ENCODE measurements at regions of chr1 and their contacts with region 1.

Region 1: GRCh38 chr1:26111530-26112406 is at the start of gene PDIK1L:
- DNase-seq: peak; percentile 97
- ATAC-seq: peak; percentile 83
- H3K4me3 ChIP-seq: peak within 1 kb of the TSS; percentile 65 to 95 (median 94)
- H3K4me3 Mint-ChIP-seq: peak within 1 kb of the TSS; percentile 93
- H3K27ac ChIP-seq: peak within 1 kb of the TSS; percentile 60 to 81
- H3K27ac Mint-ChIP-seq: peak within 1 kb of the TSS; percentile 94
- H3K4me1 ChIP-seq: peaks cover 12 to 17% of the 10 kb centered on the region in 2 donors
- H3K4me1 Mint-ChIP-seq: peaks cover 16% of the 10 kb centered on the region
- H3K27me3 ChIP-seq: no peaks in the 10 kb centered on the region
- H3K27me3 Mint-ChIP-seq: no peaks in the 10 kb centered on the region
- CTCF ChIP-seq: no peak
- total RNA-seq, gene PDIK1L: 15.2 and 17.3 TPM in 2 replicates

Region 2: GRCh38 chr1:26035959-26036755 is 75.6 kb before region 1 on chr1:
- CTCF ChIA-PET with region 1: no interaction called
- POLR2A ChIA-PET with region 1: no interaction called
- intact Hi-C with region 1: loop called (anchors 2 kb)
- DNase-seq: peak; percentile 88
- ATAC-seq: peak; percentile 74
- H3K4me3 ChIP-seq: peak overlapping the region; percentile 41 to 96 (median 95)
- H3K4me3 Mint-ChIP-seq: peak overlapping the region; percentile 96
- H3K27ac ChIP-seq: peak overlapping the region in 1 of 2 donors; percentile 67
- H3K27ac Mint-ChIP-seq: peak overlapping the region; percentile 89
- H3K4me1 ChIP-seq: peaks cover 10 to 13% of the 10 kb centered on the region in 2 donors
- H3K4me1 Mint-ChIP-seq: peaks cover 13% of the 10 kb centered on the region
- H3K27me3 ChIP-seq: peaks cover 0 to 22% (median 4%) of the 10 kb centered on the region in 4 experiments
- H3K27me3 Mint-ChIP-seq: peaks cover 6% of the 10 kb centered on the region
- CTCF ChIP-seq: peak; percentile 99

Region 3: DNA sequence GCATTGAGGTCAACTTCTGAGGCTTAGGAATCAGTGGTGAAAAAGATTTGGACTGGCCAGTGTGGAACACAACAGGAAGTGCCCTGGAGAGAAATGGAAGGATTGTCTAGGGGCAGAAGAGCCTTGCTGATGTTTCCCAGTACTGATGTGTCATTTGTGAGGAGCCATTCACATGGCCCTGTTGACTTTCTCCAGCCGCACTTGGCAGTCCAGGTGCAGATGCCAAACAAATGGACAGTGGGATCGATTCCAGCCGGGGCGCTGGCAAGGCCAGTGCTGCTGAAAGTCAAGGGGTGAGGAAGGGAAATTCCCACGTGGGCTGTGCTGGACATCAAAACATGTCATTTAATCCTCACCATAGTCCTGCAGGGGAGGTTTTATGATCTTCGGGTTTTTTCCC is 39.5 kb before region 1 on chr1:
- CTCF ChIA-PET with region 1: no interaction called
- POLR2A ChIA-PET with region 1: no interaction called
- intact Hi-C with region 1: no loop called
- DNase-seq: no peak
- ATAC-seq: no peak
- H3K4me3 ChIP-seq: no peak overlapping the region
- H3K4me3 Mint-ChIP-seq: no peak overlapping the region
- H3K27ac ChIP-seq: no peak overlapping the region
- H3K27ac Mint-ChIP-seq: no peak overlapping the region
- H3K4me1 ChIP-seq: no peaks in the 10 kb centered on the region
- H3K4me1 Mint-ChIP-seq: no peaks in the 10 kb centered on the region
- H3K27me3 ChIP-seq: peaks cover 0 to 7% (median 3%) of the 10 kb centered on the region in 4 experiments
- H3K27me3 Mint-ChIP-seq: peaks cover 39% of the 10 kb centered on the region
- CTCF ChIP-seq: no peak

Region 4: GRCh38 chr1:26169669-26170471 is 58.1 kb after region 1 on chr1 and contains the start of gene ZNF593:
- CTCF ChIA-PET with region 1: interaction called, 10 read pairs
- POLR2A ChIA-PET with region 1: no interaction called
- intact Hi-C with region 1: loop called (anchors 1 kb)
- DNase-seq: peak; percentile 92
- ATAC-seq: peak; percentile 97
- H3K4me3 ChIP-seq: peak within 1 kb of the TSS; percentile 58 to 94 (median 86)
- H3K4me3 Mint-ChIP-seq: peak within 1 kb of the TSS; percentile 93
- H3K27ac ChIP-seq: peak within 1 kb of the TSS; percentile 38 to 91
- H3K27ac Mint-ChIP-seq: peak within 1 kb of the TSS; percentile 85
- H3K4me1 ChIP-seq: peaks cover 7 to 15% of the 10 kb centered on the region in 2 donors
- H3K4me1 Mint-ChIP-seq: peaks cover 15% of the 10 kb centered on the region
- H3K27me3 ChIP-seq: no peaks in the 10 kb centered on the region
- H3K27me3 Mint-ChIP-seq: no peaks in the 10 kb centered on the region
- CTCF ChIP-seq: peak; percentile 79
- total RNA-seq, gene ZNF593: 10.7 and 13.5 TPM in 2 replicates

Region 5: DNA sequence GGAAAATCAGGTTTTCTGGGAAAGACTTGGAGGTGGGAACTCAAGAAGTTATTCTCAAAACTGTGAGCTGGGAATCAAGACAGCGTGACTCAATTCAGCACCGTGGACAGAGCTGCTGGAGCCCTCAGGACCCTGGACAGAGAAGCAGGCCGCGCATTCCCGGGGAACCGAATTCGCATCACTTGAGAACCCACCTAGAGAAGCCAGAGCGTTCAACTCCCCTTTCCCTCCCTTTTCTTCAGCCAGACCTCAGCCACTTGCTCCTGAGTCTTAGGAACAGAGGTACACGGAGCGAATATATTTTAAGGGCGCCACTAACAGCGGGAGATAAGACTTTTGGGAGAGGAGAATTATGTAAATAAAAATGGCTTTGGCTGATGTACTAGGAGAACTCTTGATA is 296.8 kb after region 1 on chr1:
- CTCF ChIA-PET with region 1: no interaction called
- POLR2A ChIA-PET with region 1: no interaction called
- intact Hi-C with region 1: loop called (anchors 2 kb)
- DNase-seq: peak; percentile 85
- ATAC-seq: peak; percentile 92
- H3K4me3 ChIP-seq: no peak overlapping the region
- H3K4me3 Mint-ChIP-seq: no peak overlapping the region
- H3K27ac ChIP-seq: no peak overlapping the region
- H3K27ac Mint-ChIP-seq: peak overlapping the region; percentile 41
- H3K4me1 ChIP-seq: peaks cover 17 to 18% of the 10 kb centered on the region in 2 donors
- H3K4me1 Mint-ChIP-seq: peaks cover 15% of the 10 kb centered on the region
- H3K27me3 ChIP-seq: peaks cover 0 to 55% (median 36%) of the 10 kb centered on the region in 4 experiments
- H3K27me3 Mint-ChIP-seq: peaks cover 63% of the 10 kb centered on the region
- CTCF ChIP-seq: no peak